ENCODE measurements at regions of chr17 and their contacts with region 1.

Region 1: DNA sequence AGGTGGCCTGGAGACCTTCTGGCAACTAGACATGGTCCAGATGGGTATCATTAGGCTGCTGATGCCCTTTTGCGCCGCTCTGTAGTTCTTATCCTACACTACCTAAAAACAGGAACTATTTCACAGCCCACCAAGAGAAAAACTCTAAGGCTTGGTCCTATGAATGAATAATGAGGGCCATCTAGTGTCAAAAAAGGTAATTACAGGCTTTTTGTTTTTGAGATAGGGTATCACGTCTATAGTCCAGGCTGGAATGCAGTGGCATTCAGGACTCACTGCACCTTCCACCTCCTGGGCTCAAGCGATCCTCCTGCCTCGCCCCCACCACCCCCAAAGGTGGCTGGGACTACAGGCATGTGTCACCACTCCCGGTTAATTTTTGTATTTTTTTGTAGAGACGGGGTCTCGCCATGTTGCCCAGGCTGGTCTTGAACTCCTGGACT is 20.9 kb downstream of the COIL start:
- DNase-seq: no peak
- ATAC-seq: peak; percentile 93
- H3K4me3 Mint-ChIP-seq: no peak overlapping the region
- H3K27ac Mint-ChIP-seq: no peak overlapping the region
- H3K4me1 Mint-ChIP-seq: peaks cover 3% of the 10 kb centered on the region
- H3K27me3 Mint-ChIP-seq: no peaks in the 10 kb centered on the region
- CTCF ChIP-seq: peak; percentile 84

Region 2: DNA sequence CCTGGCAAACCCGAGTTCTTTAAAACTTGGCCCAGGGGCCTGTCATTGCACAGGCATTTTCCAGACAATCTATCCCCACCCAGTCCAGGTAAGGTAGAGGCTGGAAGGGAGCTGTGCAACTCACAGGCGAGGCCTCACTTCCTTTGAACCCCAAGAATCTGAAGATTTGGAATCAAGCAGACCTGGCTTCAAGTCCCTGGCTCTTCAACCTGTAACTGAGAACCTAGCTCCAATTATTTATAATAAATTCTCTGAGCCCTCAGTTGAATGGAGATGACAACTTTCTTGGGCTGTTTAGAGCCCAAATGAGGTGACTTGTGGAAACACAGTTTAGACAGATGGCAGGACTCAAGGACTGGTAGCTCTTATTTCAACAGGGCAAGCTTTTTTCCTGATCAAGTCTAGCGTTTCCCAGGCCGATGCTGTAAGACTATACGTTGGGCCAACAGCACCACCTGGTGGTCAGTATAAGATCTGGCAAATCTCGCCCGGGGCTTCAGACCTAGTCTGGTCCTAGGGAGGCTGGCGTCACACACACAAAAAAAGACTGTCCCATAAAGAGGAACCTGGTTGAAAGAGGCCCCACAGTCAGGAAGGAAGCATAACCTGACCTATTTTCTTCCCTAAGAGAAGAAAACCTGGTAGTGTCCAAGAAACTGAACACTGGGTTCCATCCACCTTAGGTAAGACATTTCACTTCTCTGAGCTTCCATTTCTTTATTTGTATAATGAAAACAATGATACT is 224.1 kb before region 1 on chr17:
- CTCF ChIA-PET with region 1: no interaction called
- POLR2A ChIA-PET with region 1: no interaction called
- intact Hi-C with region 1: loop called (anchors 2 kb)
- DNase-seq: peak; percentile 38
- ATAC-seq: peak; percentile 87
- H3K4me3 Mint-ChIP-seq: no peak overlapping the region
- H3K27ac Mint-ChIP-seq: no peak overlapping the region
- H3K4me1 Mint-ChIP-seq: peaks cover 3% of the 10 kb centered on the region
- H3K27me3 Mint-ChIP-seq: no peaks in the 10 kb centered on the region
- CTCF ChIP-seq: peak; percentile 56

Region 3: DNA sequence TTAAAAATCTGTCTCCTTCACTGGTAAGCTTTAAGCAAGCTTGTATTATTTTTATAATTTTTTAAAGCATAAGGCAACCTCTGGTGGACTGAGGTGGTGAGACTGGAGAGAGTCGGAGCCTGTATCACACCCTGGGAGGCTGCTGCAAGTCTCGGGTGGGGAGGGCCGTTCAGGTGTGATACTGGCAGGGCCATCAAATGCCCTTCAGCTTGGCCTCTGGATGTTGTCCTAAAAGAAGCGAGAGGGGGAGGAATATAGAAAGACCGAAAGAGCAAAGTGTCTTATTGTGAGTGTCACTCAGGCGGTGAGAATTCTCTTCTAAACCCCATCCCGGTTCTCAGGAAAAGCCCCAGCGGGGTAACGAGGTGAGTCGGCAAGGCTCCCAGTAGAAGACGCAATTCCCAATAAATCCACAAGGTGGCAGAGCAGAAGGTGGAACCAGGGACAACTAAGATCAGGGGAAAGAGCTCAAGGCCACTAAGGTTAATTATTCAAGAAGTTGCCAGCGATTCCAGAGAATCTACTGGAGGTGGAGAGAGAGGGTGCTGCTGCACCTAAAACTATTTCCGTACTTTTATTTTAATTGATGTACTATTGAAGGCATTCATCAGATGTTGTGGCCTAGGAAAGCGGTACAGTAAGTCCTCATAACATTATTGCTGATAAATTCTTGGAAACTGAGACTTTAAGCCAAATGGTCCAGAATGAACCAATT is 120.3 kb before region 1 on chr17:
- CTCF ChIA-PET with region 1: interaction called, 112 read pairs
- POLR2A ChIA-PET with region 1: interaction called, 4 read pairs
- intact Hi-C with region 1: loop called (anchors 1 kb)
- DNase-seq: peak; percentile 38
- ATAC-seq: peak; percentile 86
- H3K4me3 Mint-ChIP-seq: no peak overlapping the region
- H3K27ac Mint-ChIP-seq: no peak overlapping the region
- H3K4me1 Mint-ChIP-seq: peaks cover 4% of the 10 kb centered on the region
- H3K27me3 Mint-ChIP-seq: no peaks in the 10 kb centered on the region
- CTCF ChIP-seq: no peak

Region 4: GRCh38 chr17:56891784-56892183 is 48.1 kb before region 1 on chr17:
- CTCF ChIA-PET with region 1: interaction called, 10 read pairs
- POLR2A ChIA-PET with region 1: no interaction called
- intact Hi-C with region 1: loop called (anchors 1 kb)
- DNase-seq: peak; percentile 50
- ATAC-seq: peak; percentile 45
- H3K4me3 Mint-ChIP-seq: no peak overlapping the region
- H3K27ac Mint-ChIP-seq: no peak overlapping the region
- H3K4me1 Mint-ChIP-seq: peaks cover 12% of the 10 kb centered on the region
- H3K27me3 Mint-ChIP-seq: no peaks in the 10 kb centered on the region
- CTCF ChIP-seq: no peak

Region 5: GRCh38 chr17:56913864-56914640 is 25.9 kb before region 1 on chr17 and contains the start of gene TRIM25:
- CTCF ChIA-PET with region 1: no interaction called
- POLR2A ChIA-PET with region 1: interaction called, 3 read pairs
- intact Hi-C with region 1: loop called (anchors 1 kb)
- DNase-seq: peak; percentile 71
- ATAC-seq: peak; percentile 87
- H3K4me3 Mint-ChIP-seq: peak within 1 kb of the TSS; percentile 94
- H3K27ac Mint-ChIP-seq: peak within 1 kb of the TSS; percentile 90
- H3K4me1 Mint-ChIP-seq: peaks cover 54% of the 10 kb centered on the region
- H3K27me3 Mint-ChIP-seq: no peaks in the 10 kb centered on the region
- CTCF ChIP-seq: no peak
- total RNA-seq, gene TRIM25: 63.5 and 71.4 TPM in 2 replicates

Region 6: DNA sequence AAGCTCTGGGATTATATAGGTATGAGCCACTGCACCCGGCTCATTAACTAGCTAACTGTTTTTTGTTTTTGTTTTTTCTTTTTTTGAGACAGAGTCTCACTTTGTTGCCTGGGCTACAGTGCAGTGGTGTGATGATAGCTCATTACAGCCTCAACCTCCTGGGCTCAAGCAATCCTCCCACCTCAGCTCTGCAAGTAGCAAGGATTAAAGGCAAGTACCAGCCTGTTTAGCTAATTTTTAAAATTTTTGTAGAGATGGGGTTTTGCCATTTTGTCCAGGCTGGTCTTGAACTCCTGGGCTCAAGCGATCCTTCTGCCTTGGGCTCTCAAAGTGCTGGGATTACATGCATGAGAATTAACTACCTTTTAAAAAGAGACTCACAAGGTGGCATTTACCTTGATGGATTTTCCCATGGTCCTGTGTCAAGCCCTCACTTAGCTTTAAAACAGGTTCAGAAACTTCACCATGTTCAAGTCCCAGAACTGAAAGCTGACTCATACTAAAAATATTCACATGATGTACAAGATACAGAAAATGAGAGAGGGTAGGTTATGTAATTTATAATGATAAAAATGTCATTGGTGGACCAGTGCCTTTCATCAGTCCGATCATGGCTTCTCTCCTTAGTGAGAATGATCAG is 140.6 kb after region 1 on chr17:
- CTCF ChIA-PET with region 1: no interaction called
- POLR2A ChIA-PET with region 1: no interaction called
- intact Hi-C with region 1: no loop called
- DNase-seq: no peak
- ATAC-seq: no peak
- H3K4me3 Mint-ChIP-seq: no peak overlapping the region
- H3K27ac Mint-ChIP-seq: no peak overlapping the region
- H3K4me1 Mint-ChIP-seq: peaks cover 7% of the 10 kb centered on the region
- H3K27me3 Mint-ChIP-seq: no peaks in the 10 kb centered on the region
- CTCF ChIP-seq: no peak